Breast epithelium (tissue), 4 donors: ENCODE measurements at regions of chr11 and their contacts with region 1.

Region 1: DNA sequence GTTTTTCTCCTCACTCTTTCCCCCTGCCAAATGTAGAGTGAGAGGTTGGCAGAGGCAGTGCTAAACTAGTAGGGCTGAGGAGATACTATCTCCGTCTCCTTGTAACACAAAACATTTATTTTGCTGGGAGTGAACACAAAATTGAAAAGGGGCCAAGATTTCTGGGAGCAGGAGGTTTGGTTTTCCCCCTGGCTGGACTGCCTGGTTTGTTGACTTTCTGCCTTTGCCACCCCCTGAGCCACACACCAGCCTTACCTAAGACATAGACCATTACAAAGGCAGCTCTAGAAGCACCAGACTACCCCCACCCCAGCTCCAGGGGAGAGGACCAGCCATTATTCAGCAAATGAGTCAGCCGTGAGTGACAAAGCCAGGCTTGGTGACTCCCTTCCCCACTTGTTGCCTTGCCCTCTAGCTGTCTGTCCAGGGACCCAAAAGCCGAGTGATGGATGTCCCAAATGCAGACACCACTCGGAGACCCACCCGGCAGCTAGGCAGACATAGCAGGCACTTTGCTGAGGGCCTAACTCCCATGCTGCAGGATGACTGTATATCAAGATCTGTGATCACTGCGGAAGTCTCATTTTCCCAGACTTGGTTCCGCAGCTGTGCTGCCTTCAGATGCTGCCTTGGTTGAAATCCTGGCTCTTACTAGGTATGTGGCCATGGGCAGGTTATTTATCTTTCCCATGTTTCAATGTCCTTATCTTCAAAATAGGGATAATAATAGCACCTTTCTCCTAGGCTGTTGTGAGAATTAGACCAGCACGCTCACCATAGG is 17.7 kb upstream of the CDON start:
- DNase-seq: peak; percentile 34 to 64
- H3K4me3 ChIP-seq: peak overlapping the region in 1 of 3 donors; percentile 26
- H3K27ac ChIP-seq: peak overlapping the region; percentile 76 to 83
- H3K4me1 ChIP-seq: no peaks in the 10 kb centered on the region
- H3K27me3 ChIP-seq: peaks cover 0 to 5% of the 10 kb centered on the region in 2 donors
- CTCF ChIP-seq: no peak
- POLR2A ChIP-seq: no peak

Region 2: GRCh38 chr11:126102436-126102981 is 22.2 kb after region 1 on chr11:
- intact Hi-C with region 1: no loop called
- DNase-seq: no peak
- H3K4me3 ChIP-seq: no peak overlapping the region
- H3K27ac ChIP-seq: peak overlapping the region; percentile 44 to 85
- H3K4me1 ChIP-seq: no peaks in the 10 kb centered on the region
- H3K27me3 ChIP-seq: no peaks in the 10 kb centered on the region
- CTCF ChIP-seq: no peak
- POLR2A ChIP-seq: no peak

Region 3: DNA sequence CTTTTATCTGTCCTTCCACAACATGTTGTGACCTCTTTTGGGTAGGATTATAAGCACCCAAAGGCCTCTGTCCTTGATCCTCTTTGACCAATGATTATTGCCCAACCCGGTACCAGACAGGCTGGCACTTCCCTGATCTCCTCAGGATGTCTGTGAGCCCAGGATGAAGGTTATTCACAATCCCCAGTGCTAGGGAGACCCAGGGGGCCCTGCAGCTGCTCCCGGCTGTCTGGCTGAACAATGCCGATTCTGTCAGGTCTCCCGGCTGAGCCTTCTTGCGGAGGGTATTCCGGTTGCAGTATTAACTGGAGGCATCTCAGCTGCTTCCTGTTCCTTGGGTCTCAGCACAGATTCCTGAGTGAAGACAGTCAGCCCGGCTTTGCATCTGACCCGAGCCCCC is 53.5 kb after region 1 on chr11:
- intact Hi-C with region 1: loop called (anchors 1 kb)
- DNase-seq: no peak
- H3K4me3 ChIP-seq: no peak overlapping the region
- H3K27ac ChIP-seq: no peak overlapping the region
- H3K4me1 ChIP-seq: no peaks in the 10 kb centered on the region
- H3K27me3 ChIP-seq: no peaks in the 10 kb centered on the region
- CTCF ChIP-seq: no peak
- POLR2A ChIP-seq: no peak